Mucosa of descending colon (tissue), 3 donors: ENCODE measurements at regions of chr12 and their contacts with region 1.

Region 1: GRCh38 chr12:39905152-39905551 is 200.7 kb downstream of the SLC2A13 start:
- DNase-seq: peak; percentile 37 to 48 (median 46)
- ATAC-seq: peak; percentile 60
- H3K4me3 ChIP-seq: no peak overlapping the region
- H3K4me1 ChIP-seq: no peaks in the 10 kb centered on the region
- CTCF ChIP-seq: no peak

Region 2: GRCh38 chr12:39807043-39807442 is 98.1 kb before region 1 on chr12:
- intact Hi-C with region 1: no loop called
- DNase-seq: no peak
- ATAC-seq: no peak
- H3K4me3 ChIP-seq: no peak overlapping the region
- H3K4me1 ChIP-seq: no peaks in the 10 kb centered on the region
- CTCF ChIP-seq: no peak

Region 3: GRCh38 chr12:39872425-39872824 is 32.7 kb before region 1 on chr12:
- intact Hi-C with region 1: loop called in 1 of 2 experiments (anchors 5 kb)
- DNase-seq: no peak
- ATAC-seq: no peak
- H3K4me3 ChIP-seq: no peak overlapping the region
- H3K4me1 ChIP-seq: no peaks in the 10 kb centered on the region
- CTCF ChIP-seq: no peak